ENCODE measurements at regions of chr16 and their contacts with region 1.

Region 1: DNA sequence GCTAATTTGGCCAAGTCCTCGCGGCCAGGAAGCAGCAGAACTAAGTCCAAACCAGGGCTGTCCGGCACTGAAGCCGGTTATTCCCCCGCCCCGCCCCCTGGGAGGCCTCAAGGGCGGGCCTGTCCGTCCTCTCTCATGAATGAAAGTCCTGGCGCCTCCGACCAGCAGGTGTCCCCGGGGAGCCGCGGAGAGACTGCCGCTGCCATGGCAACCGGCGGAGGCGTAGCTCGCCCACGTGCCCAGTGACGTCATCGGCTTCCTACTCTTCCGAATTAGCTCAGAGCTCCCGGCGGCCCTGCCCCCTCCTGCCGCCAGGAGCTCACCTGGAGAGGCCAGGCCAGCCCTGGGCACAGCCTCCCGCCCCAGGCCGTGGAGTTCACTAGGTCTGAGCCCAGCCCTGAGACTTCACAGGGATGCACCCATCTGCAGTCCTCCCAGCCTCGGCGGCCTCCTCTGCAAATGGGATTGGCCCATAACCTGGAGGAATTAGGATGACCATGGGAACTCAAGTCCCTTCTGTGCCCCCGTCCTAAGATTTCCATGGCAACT is 1.3 kb downstream of the SPATA2L start:
- DNase-seq: peak; percentile 96
- CTCF ChIP-seq: peak; percentile 73

Region 2: DNA sequence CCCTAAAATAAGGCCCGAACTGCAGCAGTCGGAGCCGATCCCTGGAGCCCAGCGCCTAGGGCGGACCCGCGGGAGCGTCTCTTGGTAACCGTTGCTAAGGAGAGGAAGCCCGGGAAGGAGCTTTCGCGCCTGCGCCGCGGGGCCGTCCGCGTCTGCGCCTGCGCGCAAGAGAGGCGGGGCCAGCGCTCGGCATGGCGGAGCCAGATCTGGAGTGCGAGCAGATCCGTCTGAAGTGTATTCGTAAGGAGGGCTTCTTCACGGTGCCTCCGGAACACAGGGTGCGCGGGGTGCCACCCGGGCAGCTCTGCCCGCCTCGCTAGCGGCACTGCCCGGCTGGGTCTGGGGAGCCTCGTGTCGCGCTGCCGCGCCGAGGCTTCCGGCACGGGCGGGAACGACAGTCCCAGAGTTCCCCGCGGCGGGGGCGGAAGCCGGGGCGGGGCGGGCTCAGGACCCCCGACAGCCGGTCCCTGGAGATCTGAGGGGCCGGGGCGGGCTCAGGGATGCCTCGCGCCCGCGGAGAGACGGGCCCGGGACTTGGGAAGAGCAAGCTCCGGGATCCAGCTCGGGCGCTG is 13.6 kb before region 1 on chr16 and contains the start of gene CDK10:
- CTCF ChIA-PET with region 1: interaction called, 16 read pairs
- POLR2A ChIA-PET with region 1: interaction called, 5 read pairs
- DNase-seq: peak; percentile 96
- CTCF ChIP-seq: no peak

Region 3: GRCh38 chr16:89711601-89712273 is 11.6 kb after region 1 on chr16:
- CTCF ChIA-PET with region 1: interaction called, 33 read pairs
- POLR2A ChIA-PET with region 1: no interaction called
- DNase-seq: peak; percentile 96
- CTCF ChIP-seq: no peak

Region 4: GRCh38 chr16:89721546-89722391 is 21.6 kb after region 1 on chr16:
- CTCF ChIA-PET with region 1: interaction called, 33 read pairs
- POLR2A ChIA-PET with region 1: no interaction called
- DNase-seq: peak; percentile 49
- CTCF ChIP-seq: no peak

Region 5: GRCh38 chr16:89791278-89791995 is 91.3 kb after region 1 on chr16:
- CTCF ChIA-PET with region 1: interaction called, 115 read pairs
- POLR2A ChIA-PET with region 1: no interaction called
- DNase-seq: no peak
- CTCF ChIP-seq: no peak